MCF 10A (cell line): ENCODE measurements at regions of chr1 and their contacts with region 1.

Region 1: DNA sequence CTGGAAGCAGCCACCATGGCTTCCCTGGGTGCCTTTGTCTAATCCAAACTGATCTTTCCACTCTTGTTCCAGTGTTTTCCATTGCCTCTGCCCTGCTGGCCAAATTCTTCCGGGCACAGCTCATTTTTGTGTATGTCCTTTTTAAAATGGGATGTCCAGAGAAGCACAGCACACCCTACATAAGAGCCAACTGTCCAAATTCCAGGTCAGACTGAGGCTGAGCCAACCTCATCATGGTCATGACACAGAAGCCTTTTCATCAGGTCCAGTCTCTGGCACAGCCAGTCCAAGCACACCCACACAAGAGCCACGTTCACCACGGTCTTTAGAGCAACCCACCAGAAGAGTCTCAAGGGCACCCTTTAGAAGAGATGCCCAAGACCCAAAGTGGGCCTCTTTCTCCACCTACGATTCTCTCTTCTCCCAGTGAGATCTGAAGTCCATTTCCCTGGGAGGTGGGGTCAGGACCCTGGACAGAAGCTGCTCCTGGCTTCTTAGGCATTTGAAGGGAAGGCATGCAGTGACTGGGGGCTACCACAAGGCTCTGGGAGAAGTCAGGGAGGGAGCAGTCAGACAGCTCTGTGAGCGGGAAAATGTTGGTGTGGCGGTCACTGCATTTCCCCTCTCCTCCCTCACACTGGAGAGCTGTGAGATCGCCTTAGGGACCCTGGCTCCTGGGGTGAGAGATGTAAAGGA is 53.2 kb downstream of the SYT2 start:
- DNase-seq: peak; percentile 61
- H3K4me3 Mint-ChIP-seq: no peak overlapping the region
- H3K27ac Mint-ChIP-seq: no peak overlapping the region
- H3K4me1 Mint-ChIP-seq: no peaks in the 10 kb centered on the region
- H3K27me3 Mint-ChIP-seq: peaks cover 91% of the 10 kb centered on the region
- CTCF ChIP-seq: peak; percentile 26

Region 2: DNA sequence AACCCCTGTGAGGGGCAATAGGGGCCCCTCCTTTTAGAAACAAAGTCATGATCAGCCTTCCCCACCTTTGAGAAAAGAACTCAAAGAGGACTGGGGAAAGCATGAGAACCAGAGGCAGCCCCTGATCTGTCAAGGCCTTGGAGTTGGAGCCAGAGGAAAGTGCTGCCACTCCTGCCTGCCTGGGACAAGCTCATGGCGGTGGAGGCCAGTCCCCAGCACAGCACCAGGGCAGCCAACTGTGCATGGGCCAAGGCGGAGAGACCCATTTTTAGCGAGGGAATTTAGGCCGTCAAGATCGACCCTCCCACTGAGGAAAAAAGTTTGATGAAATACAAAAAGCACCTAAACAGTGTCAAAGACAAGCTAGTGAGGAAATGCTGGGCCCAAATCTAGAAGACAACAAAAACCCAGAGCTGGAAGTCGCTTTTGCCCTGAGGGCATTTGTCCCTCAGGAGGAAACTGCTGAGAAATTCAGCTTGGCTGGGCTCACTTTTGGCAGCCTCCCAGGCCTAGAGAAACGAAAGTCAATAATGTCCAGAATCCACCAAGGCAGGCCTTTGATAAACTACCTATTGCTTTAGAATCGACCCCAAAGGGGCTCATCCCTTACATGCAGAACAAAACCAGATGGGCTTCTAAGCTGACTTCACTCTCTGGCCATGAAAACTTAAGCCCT is 14.2 kb after region 1 on chr1:
- CTCF ChIA-PET with region 1: interaction called, 12 read pairs
- POLR2A ChIA-PET with region 1: interaction called, 3 read pairs
- intact Hi-C with region 1: no loop called
- DNase-seq: peak; percentile 70
- H3K4me3 Mint-ChIP-seq: no peak overlapping the region
- H3K27ac Mint-ChIP-seq: no peak overlapping the region
- H3K4me1 Mint-ChIP-seq: no peaks in the 10 kb centered on the region
- H3K27me3 Mint-ChIP-seq: peaks cover 33% of the 10 kb centered on the region
- CTCF ChIP-seq: no peak

Region 3: GRCh38 chr1:202692959-202693555 is 36.0 kb after region 1 on chr1:
- CTCF ChIA-PET with region 1: interaction called, 4 read pairs
- POLR2A ChIA-PET with region 1: no interaction called
- intact Hi-C with region 1: loop called (anchors 5 kb)
- DNase-seq: peak; percentile 89
- H3K4me3 Mint-ChIP-seq: no peak overlapping the region
- H3K27ac Mint-ChIP-seq: no peak overlapping the region
- H3K4me1 Mint-ChIP-seq: no peaks in the 10 kb centered on the region
- H3K27me3 Mint-ChIP-seq: peaks cover 99% of the 10 kb centered on the region
- CTCF ChIP-seq: peak; percentile 18

Region 4: DNA sequence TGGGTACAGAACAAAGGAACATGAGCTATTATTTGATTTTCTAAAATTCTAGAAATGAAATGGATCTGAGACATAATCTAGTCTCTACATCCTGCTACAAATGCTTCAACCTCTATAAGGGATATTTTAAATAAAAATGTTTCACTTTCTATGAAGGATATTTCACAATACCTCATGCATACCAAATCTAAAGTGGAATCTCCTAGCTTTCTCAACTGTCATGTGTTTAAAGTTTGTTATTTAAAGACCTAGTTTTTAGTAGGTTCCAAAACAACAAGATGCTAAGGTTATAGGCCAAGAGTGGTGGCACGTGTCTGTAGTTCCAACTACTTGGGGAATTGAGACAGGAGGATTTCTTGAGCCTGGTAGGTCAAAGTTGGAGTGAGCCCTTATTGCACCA is 103.5 kb after region 1 on chr1:
- CTCF ChIA-PET with region 1: no interaction called
- POLR2A ChIA-PET with region 1: no interaction called
- intact Hi-C with region 1: no loop called
- DNase-seq: no peak
- H3K4me3 Mint-ChIP-seq: no peak overlapping the region
- H3K27ac Mint-ChIP-seq: no peak overlapping the region
- H3K4me1 Mint-ChIP-seq: no peaks in the 10 kb centered on the region
- H3K27me3 Mint-ChIP-seq: no peaks in the 10 kb centered on the region
- CTCF ChIP-seq: no peak

Region 5: DNA sequence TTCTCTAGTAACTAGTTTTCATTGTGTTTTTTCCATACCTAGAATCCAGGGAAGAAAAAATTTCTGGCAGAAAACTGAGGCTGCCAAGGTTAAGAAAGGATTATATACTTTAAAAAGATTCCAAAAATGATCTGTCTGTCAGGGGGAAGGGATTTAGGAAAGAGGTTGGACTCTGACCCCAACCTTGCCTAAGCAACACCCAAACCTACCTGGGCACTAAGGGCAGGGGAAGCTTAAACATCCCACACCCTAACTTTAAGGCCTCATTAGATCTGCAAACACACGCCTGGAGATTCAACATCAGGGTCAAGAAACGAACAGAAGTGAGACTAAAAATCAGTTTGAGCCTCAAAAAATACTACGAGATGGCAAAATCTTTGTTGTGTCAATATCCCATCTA is 131.7 kb after region 1 on chr1:
- CTCF ChIA-PET with region 1: no interaction called
- POLR2A ChIA-PET with region 1: no interaction called
- intact Hi-C with region 1: no loop called
- DNase-seq: no peak
- H3K4me3 Mint-ChIP-seq: no peak overlapping the region
- H3K27ac Mint-ChIP-seq: peak overlapping the region; percentile 21
- H3K4me1 Mint-ChIP-seq: peaks cover 6% of the 10 kb centered on the region
- H3K27me3 Mint-ChIP-seq: no peaks in the 10 kb centered on the region
- CTCF ChIP-seq: no peak